ENCODE measurements at regions of chr6 and their contacts with region 1.

Region 1: GRCh38 chr6:114304304-114304887 is 38.4 kb downstream of the HS3ST5 start:
- DNase-seq: peak in 1 of 2 experiments; percentile 43
- H3K4me3 ChIP-seq: no peak overlapping the region
- H3K27ac ChIP-seq: no peak overlapping the region
- H3K4me1 ChIP-seq: no peaks in the 10 kb centered on the region
- H3K27me3 ChIP-seq: no peaks in the 10 kb centered on the region
- CTCF ChIP-seq: peak; percentile 84

Region 2: DNA sequence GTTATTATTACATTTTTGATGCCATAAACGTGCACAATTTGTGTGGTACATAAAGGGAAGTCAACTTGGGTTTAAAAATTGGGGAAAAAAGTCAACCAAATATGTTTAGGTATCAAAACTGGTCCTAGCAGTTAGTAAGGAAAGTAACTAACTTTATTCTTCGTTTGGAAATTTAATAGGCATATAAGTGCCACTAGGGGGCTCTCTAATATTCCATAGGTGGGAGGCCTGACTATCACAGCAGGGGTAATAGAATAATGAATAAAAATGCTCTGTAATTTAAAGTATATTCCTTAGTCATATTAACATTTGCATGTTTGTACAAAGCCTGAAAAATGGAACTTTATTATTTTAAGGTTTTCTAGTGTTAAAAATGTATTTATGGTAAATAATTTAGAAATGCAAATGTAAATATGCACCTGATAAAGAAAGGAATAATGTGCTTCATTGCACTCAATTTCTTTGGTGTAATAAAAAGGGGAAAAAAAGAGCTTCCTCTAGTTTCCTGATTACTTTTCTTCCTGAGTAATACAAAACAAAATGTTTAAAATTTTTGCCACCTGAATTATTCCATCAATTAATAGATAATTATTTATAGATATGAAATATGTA is 207.7 kb before region 1 on chr6:
- CTCF ChIA-PET with region 1: interaction called, 3 read pairs
- POLR2A ChIA-PET with region 1: no interaction called
- intact Hi-C with region 1: loop called (anchors 2 kb)
- DNase-seq: no peak
- H3K4me3 ChIP-seq: no peak overlapping the region
- H3K27ac ChIP-seq: no peak overlapping the region
- H3K4me1 ChIP-seq: no peaks in the 10 kb centered on the region
- H3K27me3 ChIP-seq: no peaks in the 10 kb centered on the region
- CTCF ChIP-seq: peak; percentile 99

Region 3: DNA sequence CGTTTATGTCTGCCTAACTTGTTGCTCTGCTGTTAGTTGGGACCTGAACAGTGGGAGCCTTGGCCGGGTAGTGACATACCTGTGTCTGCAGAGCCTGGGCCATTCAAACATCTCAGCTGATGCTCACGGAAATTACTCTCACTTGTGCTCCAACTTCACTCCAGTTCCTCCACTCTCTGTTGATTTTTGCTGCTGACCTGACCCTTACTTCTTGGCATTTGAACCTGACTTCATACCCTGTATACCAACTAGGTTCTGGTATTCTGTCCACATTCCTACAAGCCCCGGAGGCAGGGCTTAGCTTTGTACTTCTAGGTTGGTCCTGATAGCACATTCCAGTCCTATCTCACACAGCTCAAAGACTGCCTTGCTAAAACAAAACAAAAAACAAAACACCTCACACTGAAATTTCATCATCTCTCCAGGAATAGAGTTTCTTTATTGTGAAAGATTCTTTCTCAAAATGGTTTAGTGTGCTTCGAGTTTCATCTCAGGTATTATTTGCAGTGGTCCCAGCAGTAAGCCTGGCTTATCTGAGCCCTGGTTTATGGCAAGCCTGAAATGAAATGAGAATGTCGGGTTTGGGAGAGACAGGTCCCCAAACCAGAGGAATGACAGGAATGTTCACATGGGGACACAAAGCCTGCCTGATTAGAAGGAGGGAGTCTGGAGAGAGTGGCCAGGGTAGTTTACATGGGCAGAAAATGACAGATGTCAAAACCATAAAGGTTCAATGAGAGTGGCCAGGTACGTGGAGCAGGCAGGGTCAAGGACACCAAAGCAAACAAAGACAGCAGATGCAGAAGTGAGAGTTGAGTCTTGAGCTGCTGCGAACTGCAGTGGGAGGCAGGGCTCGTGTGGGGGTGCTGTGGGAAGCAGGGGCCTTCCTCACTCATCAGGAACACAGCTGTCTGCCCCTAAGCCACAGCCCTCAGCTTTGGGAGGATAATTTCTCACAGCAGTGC is 159.2 kb before region 1 on chr6:
- CTCF ChIA-PET with region 1: no interaction called
- POLR2A ChIA-PET with region 1: no interaction called
- intact Hi-C with region 1: loop called (anchors 1 kb)
- DNase-seq: peak; percentile 55 to 64
- H3K4me3 ChIP-seq: no peak overlapping the region
- H3K27ac ChIP-seq: no peak overlapping the region
- H3K4me1 ChIP-seq: no peaks in the 10 kb centered on the region
- H3K27me3 ChIP-seq: no peaks in the 10 kb centered on the region
- CTCF ChIP-seq: no peak

Region 4: GRCh38 chr6:114339706-114340105 is 35.3 kb after region 1 on chr6:
- CTCF ChIA-PET with region 1: no interaction called
- POLR2A ChIA-PET with region 1: no interaction called
- intact Hi-C with region 1: no loop called
- DNase-seq: no peak
- H3K4me3 ChIP-seq: no peak overlapping the region
- H3K27ac ChIP-seq: no peak overlapping the region
- H3K4me1 ChIP-seq: no peaks in the 10 kb centered on the region
- H3K27me3 ChIP-seq: peaks cover 31% of the 10 kb centered on the region
- CTCF ChIP-seq: no peak

Region 5: GRCh38 chr6:114564302-114564933 is 260.0 kb after region 1 on chr6:
- CTCF ChIA-PET with region 1: no interaction called
- POLR2A ChIA-PET with region 1: no interaction called
- intact Hi-C with region 1: no loop called
- DNase-seq: no peak
- H3K4me3 ChIP-seq: no peak overlapping the region
- H3K27ac ChIP-seq: no peak overlapping the region
- H3K4me1 ChIP-seq: no peaks in the 10 kb centered on the region
- H3K27me3 ChIP-seq: no peaks in the 10 kb centered on the region
- CTCF ChIP-seq: no peak